Activated CD4-positive, alpha-beta T cell treated with anti-CD3 and anti-CD28 coated beads for 36 hours (primary cell): ENCODE measurements at regions of chr12 and their contacts with region 1.

Region 1: GRCh38 chr12:67630373-67631088 is 18.0 kb upstream of the DYRK2 start:
- DNase-seq: peak; percentile 90
- ATAC-seq: peak; percentile 93
- H3K4me3 Mint-ChIP-seq: peak overlapping the region; percentile 56
- H3K27ac Mint-ChIP-seq: peak overlapping the region; percentile 90
- H3K4me1 Mint-ChIP-seq: peaks cover 72% of the 10 kb centered on the region
- H3K27me3 Mint-ChIP-seq: no peaks in the 10 kb centered on the region

Region 2: DNA sequence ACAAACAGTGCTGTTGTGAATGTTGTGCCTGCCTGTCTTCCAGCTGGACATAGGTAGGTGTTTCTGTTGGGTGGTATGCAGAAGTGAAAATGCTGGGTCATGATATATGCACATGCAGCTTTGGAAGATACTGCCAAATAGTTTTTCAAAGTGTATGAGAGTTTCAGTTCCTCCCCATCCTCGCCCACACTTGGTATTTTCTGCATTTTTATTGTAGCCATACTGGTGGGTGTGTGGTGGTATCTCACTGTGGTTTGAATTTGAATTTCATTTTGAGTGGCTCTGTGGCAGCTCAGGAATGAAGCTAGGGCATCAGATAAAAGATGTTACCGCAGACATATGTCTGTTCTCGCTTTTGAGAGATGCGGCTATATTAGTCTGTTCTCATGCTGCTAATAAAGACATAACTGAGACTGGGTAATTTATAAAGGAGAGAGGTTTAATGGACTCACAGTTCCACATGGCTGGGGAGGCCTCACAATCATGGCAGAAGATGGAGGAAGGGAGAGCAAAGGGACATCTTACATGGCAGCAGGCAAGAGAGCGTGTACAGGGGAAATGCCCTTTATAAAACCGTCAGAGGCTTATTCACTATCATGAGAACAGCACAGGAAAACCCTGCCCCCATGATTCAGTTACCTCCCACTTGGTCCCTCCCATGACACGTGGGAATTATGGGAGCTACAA is 178.3 kb before region 1 on chr12:
- CTCF ChIA-PET with region 1: no interaction called
- POLR2A ChIA-PET with region 1: no interaction called
- intact Hi-C with region 1: loop called in 1 of 2 experiments (anchors 2 kb)
- DNase-seq: peak; percentile 50
- ATAC-seq: peak; percentile 69
- H3K4me3 Mint-ChIP-seq: no peak overlapping the region
- H3K27ac Mint-ChIP-seq: peak overlapping the region; percentile 6
- H3K4me1 Mint-ChIP-seq: peaks cover 44% of the 10 kb centered on the region
- H3K27me3 Mint-ChIP-seq: peaks cover 22% of the 10 kb centered on the region

Region 3: GRCh38 chr12:67592216-67593011 is 38.1 kb before region 1 on chr12:
- CTCF ChIA-PET with region 1: interaction called, 7 read pairs
- POLR2A ChIA-PET with region 1: no interaction called
- intact Hi-C with region 1: loop called in 1 of 2 experiments (anchors 5 kb)
- DNase-seq: peak; percentile 7
- ATAC-seq: peak; percentile 64
- H3K4me3 Mint-ChIP-seq: no peak overlapping the region
- H3K27ac Mint-ChIP-seq: peak overlapping the region; percentile 66
- H3K4me1 Mint-ChIP-seq: peaks cover 47% of the 10 kb centered on the region
- H3K27me3 Mint-ChIP-seq: no peaks in the 10 kb centered on the region